ENCODE measurements at regions of chr14 and their contacts with region 1.

Region 1: GRCh38 chr14:54488646-54489317 is at the start of gene GMFB:
- DNase-seq: peak; percentile 97
- ATAC-seq: peak; percentile 98
- H3K4me3 ChIP-seq: peak within 1 kb of the TSS; percentile 54 to 83
- H3K27ac ChIP-seq: peak within 1 kb of the TSS; percentile 63 to 89
- H3K4me1 ChIP-seq: peaks cover 0 to 2% of the 10 kb centered on the region in 2 donors
- H3K27me3 ChIP-seq: no peaks in the 10 kb centered on the region
- total RNA-seq, gene GMFB: 37.6 to 40.2 TPM

Region 2: DNA sequence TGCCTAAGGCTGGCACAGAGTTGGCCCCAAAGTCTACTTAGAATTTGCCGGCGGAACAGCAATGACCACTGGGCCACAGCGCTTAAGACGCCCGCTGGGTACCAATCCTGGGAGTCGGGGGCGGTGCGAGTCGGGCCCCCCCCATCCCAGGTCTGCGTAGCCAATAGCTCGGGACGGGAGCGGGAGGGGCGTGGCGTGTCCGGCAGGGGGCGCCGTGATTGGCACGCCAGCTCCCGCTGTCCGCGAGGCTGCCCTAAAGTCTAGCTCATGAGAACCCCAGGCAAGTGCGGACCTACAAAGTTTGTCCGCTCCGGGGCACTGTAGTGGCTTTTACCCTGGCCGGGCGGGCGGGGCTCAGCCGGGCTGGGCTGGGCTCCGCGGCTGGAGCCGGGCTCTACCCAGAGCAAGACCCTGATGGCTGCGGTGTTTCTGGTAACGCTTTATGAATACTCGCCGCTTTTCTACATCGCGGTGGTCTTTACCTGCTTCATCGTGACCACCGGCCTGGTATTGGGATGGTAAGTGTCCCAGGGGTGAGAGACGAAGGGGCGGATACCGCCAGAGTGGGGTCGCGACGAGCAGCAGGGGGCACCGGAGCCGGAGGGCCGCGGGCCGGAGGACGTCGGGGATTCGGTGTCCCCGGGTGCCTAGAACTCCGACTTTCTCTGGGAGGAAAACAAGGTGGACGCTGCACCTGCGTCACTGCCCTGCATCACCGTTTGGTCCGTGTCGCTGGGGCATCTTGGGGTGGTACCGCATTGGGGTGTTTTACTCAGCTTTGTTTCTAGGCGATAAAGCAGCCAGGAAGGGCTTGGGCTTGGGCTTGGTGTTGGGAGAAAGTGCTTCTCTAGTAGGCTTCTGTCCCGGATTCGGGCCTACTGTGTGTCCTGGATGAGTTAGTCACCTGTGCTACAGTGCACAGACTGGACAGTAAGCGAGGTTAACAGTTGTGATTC is 21.0 kb after region 1 on chr14 and contains the start of gene CGRRF1:
- intact Hi-C with region 1: loop called in 1 of 2 experiments (anchors 1 kb)
- DNase-seq: peak; percentile 99 to 100
- ATAC-seq: peak; percentile 99
- H3K4me3 ChIP-seq: peak within 1 kb of the TSS; percentile 36 to 90
- H3K27ac ChIP-seq: peak within 1 kb of the TSS; percentile 6 to 24
- H3K4me1 ChIP-seq: peaks cover 0 to 10% of the 10 kb centered on the region in 2 donors
- H3K27me3 ChIP-seq: no peaks in the 10 kb centered on the region
- total RNA-seq, gene CGRRF1: 18.7 to 25.4 TPM

Region 3: DNA sequence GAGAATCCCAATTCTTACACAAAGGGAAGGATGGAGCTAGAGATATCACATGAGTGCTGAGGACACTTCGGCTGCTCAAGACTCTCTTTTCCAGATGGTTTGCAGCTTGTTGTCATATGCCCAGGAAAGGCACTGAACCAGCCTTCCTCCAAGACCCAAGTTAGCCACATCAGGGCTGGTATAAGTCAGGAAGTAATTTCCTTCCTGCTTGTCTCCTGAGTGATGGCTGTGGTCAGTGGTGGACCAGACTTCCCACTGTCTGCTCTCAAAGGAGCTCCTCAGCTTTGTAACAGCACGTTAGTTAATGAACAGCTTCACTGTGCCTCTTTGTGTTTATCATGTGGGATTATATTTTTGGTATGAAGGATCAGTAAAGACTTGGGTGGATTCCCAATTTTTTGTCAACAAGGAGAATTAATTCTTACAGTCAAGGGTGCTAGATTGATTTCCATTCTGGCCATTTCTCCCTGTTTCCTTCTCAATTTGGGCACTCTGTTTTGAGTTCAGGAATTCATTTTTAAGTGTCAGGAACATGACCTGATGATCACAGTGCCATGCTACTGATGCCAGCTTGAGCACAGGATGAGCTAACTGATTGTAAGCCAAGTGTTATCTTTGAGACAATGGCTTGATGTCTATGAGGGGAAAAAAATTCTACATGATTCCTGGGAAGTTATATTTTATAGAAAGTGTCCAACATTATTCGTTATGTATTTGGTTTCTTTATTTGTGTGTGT is 268.0 kb after region 1 on chr14:
- intact Hi-C with region 1: no loop called
- DNase-seq: no peak
- ATAC-seq: no peak
- H3K4me3 ChIP-seq: no peak overlapping the region
- H3K27ac ChIP-seq: no peak overlapping the region
- H3K4me1 ChIP-seq: no peaks in the 10 kb centered on the region
- H3K27me3 ChIP-seq: no peaks in the 10 kb centered on the region

Measured in aorta (tissue), 5 donors.